ENCODE measurements at regions of chr11 and their contacts with region 1.

Region 1: DNA sequence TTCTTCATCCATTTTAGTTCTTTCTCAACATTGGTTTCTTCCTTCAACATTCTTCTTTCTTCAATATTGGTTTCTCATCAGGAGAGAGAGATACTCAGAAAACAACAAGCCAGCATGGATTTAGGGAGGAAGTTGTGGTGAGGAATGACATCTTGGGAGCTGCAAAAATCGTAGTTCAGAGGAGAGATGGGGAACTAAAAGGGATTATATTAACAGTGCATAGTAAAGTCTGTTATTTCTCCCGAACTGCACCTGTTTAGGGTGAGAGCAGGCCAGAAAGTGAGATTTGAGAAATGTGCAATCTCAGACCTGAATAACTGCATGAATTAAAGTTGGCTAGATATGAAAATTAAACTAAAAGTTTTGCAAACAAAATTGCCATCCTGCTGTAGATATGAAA is 94.5 kb downstream of the CASP12 start:
- DNase-seq: no peak

Region 2: DNA sequence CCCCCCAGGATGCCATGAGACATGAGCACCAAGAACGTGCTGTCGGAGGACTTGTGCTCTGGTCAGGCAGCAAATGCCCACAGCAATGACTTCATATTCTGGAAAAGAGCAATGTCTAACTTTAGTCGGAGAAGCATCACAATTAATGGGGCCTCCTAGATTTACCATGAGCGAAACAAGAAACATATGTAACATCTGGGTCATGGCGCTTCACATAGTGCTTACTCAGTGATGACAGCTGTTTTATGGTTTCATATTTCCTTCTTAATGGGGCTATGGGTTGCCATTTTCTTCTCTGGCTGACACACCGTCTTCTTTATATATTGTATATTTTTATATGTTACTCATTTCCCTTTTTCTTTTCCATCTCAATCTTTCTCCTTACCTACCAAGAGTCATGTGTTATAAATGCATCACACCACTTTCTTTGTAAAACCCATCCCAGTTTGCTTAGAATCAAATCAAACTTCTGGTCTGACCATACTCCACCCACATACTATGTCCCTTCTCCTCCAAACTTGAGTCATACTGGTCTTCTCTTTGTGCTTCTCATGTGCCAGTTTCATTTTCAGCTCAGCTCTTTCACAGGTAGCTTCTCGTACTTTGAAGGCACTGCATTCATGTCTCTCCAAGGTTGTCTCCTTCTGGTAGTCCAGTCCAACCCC is 103.9 kb after region 1 on chr11:
- intact Hi-C with region 1: no loop called
- DNase-seq: no peak

Region 3: DNA sequence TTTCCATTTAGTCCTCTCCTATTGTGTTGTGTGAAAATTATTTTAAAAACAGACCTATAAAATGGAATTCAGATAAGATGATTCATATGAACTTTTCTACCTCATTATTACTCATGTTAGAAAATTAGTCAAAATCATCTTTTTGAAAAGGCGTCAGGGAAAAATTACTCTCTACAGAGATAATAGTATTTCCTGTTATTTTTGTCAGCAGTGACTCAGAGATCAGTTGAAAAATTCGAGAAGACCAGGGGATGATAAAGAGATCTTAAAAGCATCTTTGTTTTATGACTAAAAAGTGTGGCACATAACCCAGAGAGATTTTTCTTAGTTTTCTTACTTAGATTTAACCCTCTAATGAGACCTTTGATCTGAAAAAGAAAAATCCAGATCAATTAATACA is 493.7 kb after region 1 on chr11:
- intact Hi-C with region 1: no loop called
- DNase-seq: no peak

Region 4: DNA sequence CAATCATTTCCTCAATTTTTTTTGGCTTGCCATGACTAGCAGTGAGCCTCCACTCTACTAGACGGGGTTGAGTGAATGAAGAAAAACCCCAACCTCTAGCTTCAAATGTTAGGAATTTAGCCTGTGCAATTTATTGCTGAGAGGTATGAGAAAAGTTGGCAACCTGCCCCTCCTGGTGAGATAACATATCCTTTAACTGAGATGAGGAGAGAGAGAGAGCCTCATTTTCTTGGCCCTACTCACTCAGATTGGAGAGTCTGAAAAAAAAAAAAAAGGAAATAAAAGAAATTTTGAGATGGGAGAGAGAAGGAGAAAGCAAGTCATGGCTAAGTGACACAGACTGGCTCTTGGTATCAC is 554.0 kb after region 1 on chr11:
- intact Hi-C with region 1: loop called (anchors 10 kb)
- DNase-seq: no peak